ENCODE measurements at regions of chr4 and their contacts with region 1.

Region 1: DNA sequence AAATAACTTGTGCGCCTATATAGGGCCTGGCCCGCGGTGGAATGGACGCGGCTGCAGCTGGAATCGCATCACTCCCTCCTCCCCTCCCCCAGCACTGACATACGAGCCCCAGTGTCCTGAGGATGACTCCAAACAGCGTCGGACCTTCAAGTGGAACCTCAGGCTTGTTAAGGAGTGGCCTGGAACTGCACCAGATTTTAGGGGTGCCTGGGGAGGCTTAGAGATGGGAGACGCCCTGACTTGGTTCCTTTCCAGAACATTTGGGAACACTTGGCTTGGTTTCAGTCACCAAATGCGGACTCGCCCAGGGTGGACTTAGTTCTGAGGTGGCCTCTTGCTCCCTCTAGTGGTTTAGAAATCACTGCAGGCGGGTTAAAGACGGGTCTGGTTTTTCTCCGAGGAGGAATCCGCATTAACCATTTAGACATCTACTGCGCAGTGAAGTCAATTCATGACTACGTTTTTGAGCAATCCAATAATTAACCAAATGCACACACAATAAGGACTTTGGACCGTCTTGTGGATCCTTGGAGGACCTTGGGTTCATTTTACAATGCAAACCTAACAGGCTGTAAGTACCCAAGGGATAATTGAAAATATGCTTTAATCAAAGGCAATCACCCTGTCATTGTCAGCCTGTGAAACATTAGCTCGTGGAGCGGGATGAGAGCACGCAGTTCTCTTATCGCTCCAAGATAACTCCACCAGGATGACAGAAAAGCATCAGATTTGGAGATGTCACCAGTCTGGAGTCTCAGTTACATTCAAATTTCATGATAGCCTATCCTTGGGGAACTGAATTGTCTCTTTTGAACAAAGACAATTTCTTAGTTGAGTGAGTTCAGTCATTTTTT is 11.2 kb upstream of the PDGFRA start:
- DNase-seq: peak; percentile 86 to 88
- H3K4me3 ChIP-seq: peak overlapping the region; percentile 38
- H3K4me3 Mint-ChIP-seq: peak overlapping the region; percentile 78
- H3K27ac Mint-ChIP-seq: peak overlapping the region; percentile 85
- H3K4me1 ChIP-seq: peaks cover 53% of the 10 kb centered on the region
- H3K4me1 Mint-ChIP-seq: peaks cover 23% of the 10 kb centered on the region
- H3K27me3 ChIP-seq: no peaks in the 10 kb centered on the region
- H3K27me3 Mint-ChIP-seq: no peaks in the 10 kb centered on the region
- CTCF ChIP-seq: peak; percentile 76 to 78

Region 2: GRCh38 chr4:53653484-53654053 is 564.3 kb before region 1 on chr4:
- CTCF ChIA-PET with region 1: no interaction called
- POLR2A ChIA-PET with region 1: no interaction called
- intact Hi-C with region 1: loop called (anchors 5 kb)
- DNase-seq: peak in 1 of 2 experiments; percentile 5
- H3K4me3 ChIP-seq: no peak overlapping the region
- H3K4me3 Mint-ChIP-seq: no peak overlapping the region
- H3K27ac Mint-ChIP-seq: no peak overlapping the region
- H3K4me1 ChIP-seq: 0 out of 2 replicates have a peak, but pooled peaks cover 5% of the 10 kb centered on the region
- H3K4me1 Mint-ChIP-seq: peaks cover 18% of the 10 kb centered on the region
- H3K27me3 ChIP-seq: no peaks in the 10 kb centered on the region
- H3K27me3 Mint-ChIP-seq: no peaks in the 10 kb centered on the region
- CTCF ChIP-seq: no peak

Region 3: GRCh38 chr4:54014666-54015160 is 203.2 kb before region 1 on chr4:
- CTCF ChIA-PET with region 1: no interaction called
- POLR2A ChIA-PET with region 1: no interaction called
- intact Hi-C with region 1: loop called (anchors 5 kb)
- DNase-seq: no peak
- H3K4me3 ChIP-seq: no peak overlapping the region
- H3K4me3 Mint-ChIP-seq: no peak overlapping the region
- H3K27ac Mint-ChIP-seq: no peak overlapping the region
- H3K4me1 ChIP-seq: peaks cover 30% of the 10 kb centered on the region
- H3K4me1 Mint-ChIP-seq: peaks cover 19% of the 10 kb centered on the region
- H3K27me3 ChIP-seq: no peaks in the 10 kb centered on the region
- H3K27me3 Mint-ChIP-seq: no peaks in the 10 kb centered on the region
- CTCF ChIP-seq: no peak

Region 4: DNA sequence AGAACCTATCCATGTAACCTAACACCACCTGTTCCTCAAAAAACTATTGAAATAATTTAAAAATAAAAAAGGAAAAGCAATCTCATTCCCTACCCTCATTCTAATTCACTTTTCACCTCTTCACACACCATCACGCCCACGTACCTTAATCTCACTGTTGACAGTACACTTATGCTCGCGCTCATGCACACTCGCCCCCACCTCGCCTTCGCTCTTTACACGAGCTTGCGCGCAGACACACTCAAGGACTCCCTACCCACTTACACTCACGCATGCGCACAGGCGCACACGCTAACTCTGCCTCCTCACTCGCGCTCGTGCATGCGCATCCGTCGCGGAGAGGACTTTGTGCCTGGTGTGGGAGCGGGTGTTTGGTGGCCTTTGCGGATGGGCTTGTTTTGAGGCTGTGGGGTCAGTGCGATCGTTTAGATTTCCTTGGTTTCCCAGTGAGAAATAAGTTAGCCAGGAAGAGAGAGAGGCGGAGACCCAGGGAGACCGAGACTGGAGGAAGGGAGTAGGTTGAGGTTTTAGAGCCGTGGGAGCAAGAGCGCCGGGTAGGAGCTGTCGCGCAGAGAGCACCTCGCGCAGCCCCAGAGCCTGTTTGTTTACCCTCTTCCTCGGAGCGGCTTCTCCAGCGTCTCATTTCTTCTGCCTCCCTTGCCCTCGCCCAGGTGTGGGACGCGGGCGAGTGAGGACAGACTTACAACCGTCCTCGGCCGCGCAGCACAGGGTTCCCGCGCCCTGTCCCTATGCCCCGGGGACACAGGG is 126.0 kb before region 1 on chr4:
- CTCF ChIA-PET with region 1: no interaction called
- POLR2A ChIA-PET with region 1: no interaction called
- intact Hi-C with region 1: loop called (anchors 5 kb)
- DNase-seq: peak; percentile 71 to 79
- H3K4me3 ChIP-seq: peak overlapping the region; percentile 51
- H3K4me3 Mint-ChIP-seq: peak overlapping the region; percentile 80
- H3K27ac Mint-ChIP-seq: peak overlapping the region; percentile 75
- H3K4me1 ChIP-seq: 0 out of 2 replicates have a peak, but pooled peaks cover 4% of the 10 kb centered on the region
- H3K4me1 Mint-ChIP-seq: peaks cover 10% of the 10 kb centered on the region
- H3K27me3 ChIP-seq: no peaks in the 10 kb centered on the region
- H3K27me3 Mint-ChIP-seq: no peaks in the 10 kb centered on the region
- CTCF ChIP-seq: no peak

Region 5: GRCh38 chr4:54228056-54228527 is 10.2 kb after region 1 on chr4:
- CTCF ChIA-PET with region 1: interaction called, 6 read pairs
- POLR2A ChIA-PET with region 1: no interaction called
- intact Hi-C with region 1: loop called (anchors 1 kb)
- DNase-seq: peak; percentile 85 to 90
- H3K4me3 ChIP-seq: peak overlapping the region; percentile 64
- H3K4me3 Mint-ChIP-seq: peak overlapping the region; percentile 87
- H3K27ac Mint-ChIP-seq: peak overlapping the region; percentile 79
- H3K4me1 ChIP-seq: peaks cover 9% of the 10 kb centered on the region; the same call in 1 of the 2 replicates
- H3K4me1 Mint-ChIP-seq: peaks cover 13% of the 10 kb centered on the region
- H3K27me3 ChIP-seq: no peaks in the 10 kb centered on the region
- H3K27me3 Mint-ChIP-seq: no peaks in the 10 kb centered on the region
- CTCF ChIP-seq: peak; percentile 87 to 89

Measured in Caco-2 (cell line).